Activated CD4-positive, alpha-beta memory T cell treated with anti-CD3 and anti-CD28 coated beads for 36 hours (primary cell): ENCODE measurements at regions of chr6 and their contacts with region 1.

Region 1: DNA sequence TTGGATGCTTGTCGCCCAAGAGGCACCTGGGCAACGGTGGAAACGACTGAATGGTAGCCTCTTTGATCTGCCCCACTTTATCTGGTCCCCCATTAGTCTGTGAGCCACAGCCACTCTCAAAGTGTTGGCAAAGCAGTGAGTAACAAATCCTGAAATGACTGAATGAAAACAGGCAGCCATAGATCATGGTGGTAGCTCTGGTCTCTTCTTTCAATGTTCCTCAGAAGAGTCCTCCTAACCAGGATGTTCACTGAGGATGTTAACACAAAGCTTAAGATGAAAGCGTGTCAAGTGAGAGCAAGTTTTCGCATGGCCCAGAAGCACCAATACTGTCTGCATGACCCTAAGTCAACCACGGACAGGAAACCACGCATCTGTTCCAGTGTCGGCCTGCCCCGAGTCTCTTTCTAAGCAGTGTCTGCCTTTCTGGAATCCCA is 107.3 kb downstream of the IRF4 start:
- DNase-seq: peak; percentile 83
- H3K4me3 Mint-ChIP-seq: peak overlapping the region; percentile 61
- H3K27ac Mint-ChIP-seq: peak overlapping the region; percentile 93
- H3K4me1 Mint-ChIP-seq: peaks cover 83% of the 10 kb centered on the region
- H3K27me3 Mint-ChIP-seq: no peaks in the 10 kb centered on the region

Region 2: DNA sequence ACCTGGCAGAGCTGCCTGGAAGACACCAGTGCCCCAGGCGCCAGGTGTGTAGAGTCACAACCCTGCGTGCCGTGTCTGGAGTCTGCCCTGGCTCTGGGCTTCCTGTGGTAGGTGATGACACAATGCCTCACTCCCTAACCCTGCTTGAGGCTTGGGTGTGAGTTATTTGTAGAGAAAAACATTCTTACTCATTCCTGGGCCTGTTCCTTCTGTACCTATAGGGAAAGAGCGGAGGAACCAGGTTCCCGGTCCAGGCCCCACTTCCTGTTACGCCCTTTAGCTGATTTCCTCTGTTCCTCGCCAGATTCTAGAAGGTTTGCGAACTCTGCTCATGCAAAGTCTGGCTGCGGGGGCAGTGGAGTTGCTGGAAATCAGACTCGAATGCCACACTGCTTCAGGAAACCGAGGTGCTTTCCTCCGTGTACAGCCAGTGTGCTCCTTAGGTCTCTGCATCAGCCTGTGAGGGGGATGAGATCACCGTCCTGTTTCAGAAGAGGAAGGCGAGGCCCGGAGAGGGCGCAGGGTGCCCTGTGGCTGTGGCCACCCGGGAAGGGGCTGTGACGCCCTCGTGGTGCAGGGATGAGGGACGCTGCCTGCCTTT is 273.6 kb before region 1 on chr6:
- CTCF ChIA-PET with region 1: no interaction called
- POLR2A ChIA-PET with region 1: interaction called, 4 read pairs
- intact Hi-C with region 1: loop called (anchors 2 kb)
- DNase-seq: peak; percentile 90
- H3K4me3 Mint-ChIP-seq: peak overlapping the region; percentile 54
- H3K27ac Mint-ChIP-seq: peak overlapping the region; percentile 96
- H3K4me1 Mint-ChIP-seq: peaks cover 72% of the 10 kb centered on the region
- H3K27me3 Mint-ChIP-seq: peaks cover 12% of the 10 kb centered on the region

Region 3: GRCh38 chr6:356828-357251 is 142.0 kb before region 1 on chr6:
- CTCF ChIA-PET with region 1: no interaction called
- POLR2A ChIA-PET with region 1: no interaction called
- intact Hi-C with region 1: no loop called
- DNase-seq: peak; percentile 28
- H3K4me3 Mint-ChIP-seq: no peak overlapping the region
- H3K27ac Mint-ChIP-seq: no peak overlapping the region
- H3K4me1 Mint-ChIP-seq: peaks cover 6% of the 10 kb centered on the region
- H3K27me3 Mint-ChIP-seq: no peaks in the 10 kb centered on the region

Region 4: GRCh38 chr6:408599-409102 is 90.2 kb before region 1 on chr6:
- CTCF ChIA-PET with region 1: interaction called, 3 read pairs
- POLR2A ChIA-PET with region 1: interaction called, 28 read pairs
- intact Hi-C with region 1: no loop called
- DNase-seq: no peak
- H3K4me3 Mint-ChIP-seq: peak overlapping the region; percentile 14
- H3K27ac Mint-ChIP-seq: peak overlapping the region; percentile 62
- H3K4me1 Mint-ChIP-seq: peaks cover 66% of the 10 kb centered on the region
- H3K27me3 Mint-ChIP-seq: no peaks in the 10 kb centered on the region

Region 5: DNA sequence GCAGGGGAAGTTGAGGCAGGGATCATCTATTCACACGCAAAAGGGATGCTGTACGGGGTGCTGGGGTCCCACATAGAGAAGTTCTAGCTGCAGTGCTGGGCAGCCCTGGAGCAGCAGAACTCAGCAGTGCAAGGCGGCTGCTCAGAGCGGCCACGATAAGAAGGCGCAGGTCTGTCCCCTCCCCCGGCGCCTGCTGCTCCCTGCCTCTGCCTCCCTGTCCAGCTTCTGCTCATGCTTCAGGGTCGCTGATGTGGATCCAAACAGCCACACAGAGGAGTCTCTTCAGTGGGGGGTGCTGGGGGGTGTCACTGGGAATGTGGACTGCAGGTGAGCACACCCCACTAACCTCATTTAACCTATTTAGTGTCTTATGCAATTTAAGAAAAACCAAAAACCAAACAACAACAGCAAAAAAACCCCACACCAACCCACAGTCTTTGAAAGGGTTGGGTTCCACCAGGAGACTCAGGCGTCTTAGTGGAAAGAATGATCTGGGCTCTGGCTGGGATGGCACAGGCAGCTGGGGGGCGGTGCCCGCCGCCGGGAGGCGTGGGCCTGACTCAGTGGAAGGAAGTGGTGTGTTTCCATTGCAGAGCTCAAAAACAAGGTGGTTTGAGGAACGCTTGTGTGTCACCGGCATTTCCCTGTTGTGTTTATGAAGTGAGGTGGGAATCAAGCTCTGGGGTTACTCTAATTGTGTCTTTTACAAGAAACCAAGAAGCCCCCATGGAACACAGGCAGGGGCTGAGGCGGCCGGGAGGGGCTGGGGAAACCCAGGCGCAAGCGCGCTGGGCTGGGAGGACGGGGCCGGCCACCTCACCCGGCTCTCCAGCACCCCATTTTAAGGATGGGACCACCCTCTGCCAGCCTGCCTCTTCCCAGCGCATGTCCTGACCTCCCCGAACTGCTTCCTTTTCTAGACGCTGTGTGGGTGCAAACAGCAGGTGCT is 52.1 kb before region 1 on chr6:
- CTCF ChIA-PET with region 1: interaction called, 3 read pairs
- POLR2A ChIA-PET with region 1: interaction called, 30 read pairs
- intact Hi-C with region 1: loop called (anchors 1 kb)
- DNase-seq: peak; percentile 97
- H3K4me3 Mint-ChIP-seq: peak overlapping the region; percentile 77
- H3K27ac Mint-ChIP-seq: peak overlapping the region; percentile 97
- H3K4me1 Mint-ChIP-seq: peaks cover 55% of the 10 kb centered on the region
- H3K27me3 Mint-ChIP-seq: peaks cover 1% of the 10 kb centered on the region

Region 6: GRCh38 chr6:484086-484745 is 14.6 kb before region 1 on chr6:
- CTCF ChIA-PET with region 1: interaction called, 7 read pairs
- POLR2A ChIA-PET with region 1: interaction called, 44 read pairs
- intact Hi-C with region 1: loop called (anchors 1 kb)
- DNase-seq: peak; percentile 75
- H3K4me3 Mint-ChIP-seq: peak overlapping the region; percentile 58
- H3K27ac Mint-ChIP-seq: peak overlapping the region; percentile 99
- H3K4me1 Mint-ChIP-seq: peaks cover 73% of the 10 kb centered on the region
- H3K27me3 Mint-ChIP-seq: no peaks in the 10 kb centered on the region

Region 7: GRCh38 chr6:527989-528673 is 29.3 kb after region 1 on chr6:
- CTCF ChIA-PET with region 1: interaction called, 3 read pairs
- POLR2A ChIA-PET with region 1: interaction called, 7 read pairs
- intact Hi-C with region 1: loop called (anchors 2 kb)
- DNase-seq: no peak
- H3K4me3 Mint-ChIP-seq: peak overlapping the region; percentile 16
- H3K27ac Mint-ChIP-seq: peak overlapping the region; percentile 87
- H3K4me1 Mint-ChIP-seq: peaks cover 30% of the 10 kb centered on the region
- H3K27me3 Mint-ChIP-seq: no peaks in the 10 kb centered on the region

Region 8: DNA sequence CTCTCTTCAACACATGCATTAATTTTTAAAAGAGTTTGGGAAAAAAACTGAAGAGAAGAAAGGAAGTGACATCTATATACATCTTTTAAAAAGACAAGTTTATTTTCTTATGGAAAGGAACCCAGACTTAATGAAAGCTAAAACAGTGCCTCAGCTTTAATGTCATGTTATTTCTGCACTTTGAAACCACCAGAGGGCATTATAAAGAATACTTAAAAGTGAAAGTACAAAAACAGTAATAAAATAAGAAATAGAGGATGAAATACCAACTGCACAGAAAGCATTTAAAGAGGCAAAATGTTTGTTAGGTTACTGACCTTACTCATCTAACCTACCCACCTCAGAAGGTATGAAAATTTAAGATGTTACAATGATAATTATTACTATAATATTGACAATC is 59.3 kb after region 1 on chr6:
- CTCF ChIA-PET with region 1: no interaction called
- POLR2A ChIA-PET with region 1: interaction called, 5 read pairs
- intact Hi-C with region 1: loop called (anchors 1 kb)
- DNase-seq: no peak
- H3K4me3 Mint-ChIP-seq: no peak overlapping the region
- H3K27ac Mint-ChIP-seq: peak overlapping the region; percentile 87
- H3K4me1 Mint-ChIP-seq: peaks cover 60% of the 10 kb centered on the region
- H3K27me3 Mint-ChIP-seq: no peaks in the 10 kb centered on the region